CD4-positive, alpha-beta T cell (primary cell): ENCODE measurements at regions of chr9 and their contacts with region 1.

Region 1: GRCh38 chr9:136885950-136886578 is at the start of gene TRAF2:
- DNase-seq: peak; percentile 92 to 99 (median 96)
- ATAC-seq: peak; percentile 92
- H3K4me3 ChIP-seq: peak within 1 kb of the TSS; percentile 85
- H3K4me3 Mint-ChIP-seq: peak within 1 kb of the TSS; percentile 88
- H3K27ac ChIP-seq: peak within 1 kb of the TSS; percentile 81 to 95
- H3K27ac Mint-ChIP-seq: peak within 1 kb of the TSS; percentile 92
- H3K4me1 ChIP-seq: peaks cover 68% of the 10 kb centered on the region
- H3K4me1 Mint-ChIP-seq: peaks cover 26% of the 10 kb centered on the region
- H3K27me3 ChIP-seq: no peaks in the 10 kb centered on the region
- H3K27me3 Mint-ChIP-seq: no peaks in the 10 kb centered on the region
- CTCF ChIP-seq: no peak
- total RNA-seq, gene TRAF2: 10.6 to 11.6 TPM

Region 2: GRCh38 chr9:136807281-136808074 is 78.6 kb before region 1 on chr9 and contains the start of gene RABL6:
- CTCF ChIA-PET with region 1: no interaction called
- POLR2A ChIA-PET with region 1: interaction called, 13 read pairs
- intact Hi-C with region 1: loop called in 1 of 2 experiments (anchors 5 kb)
- DNase-seq: peak; percentile 60 to 94 (median 78)
- ATAC-seq: peak; percentile 88
- H3K4me3 ChIP-seq: peak within 1 kb of the TSS; percentile 68
- H3K4me3 Mint-ChIP-seq: peak within 1 kb of the TSS; percentile 90
- H3K27ac ChIP-seq: peak within 1 kb of the TSS; percentile 53 to 81
- H3K27ac Mint-ChIP-seq: peak within 1 kb of the TSS; percentile 81
- H3K4me1 ChIP-seq: peaks cover 49% of the 10 kb centered on the region
- H3K4me1 Mint-ChIP-seq: peaks cover 37% of the 10 kb centered on the region
- H3K27me3 ChIP-seq: no peaks in the 10 kb centered on the region
- H3K27me3 Mint-ChIP-seq: no peaks in the 10 kb centered on the region
- CTCF ChIP-seq: no peak
- total RNA-seq, gene RABL6: 46.4 to 48.5 TPM

Region 3: DNA sequence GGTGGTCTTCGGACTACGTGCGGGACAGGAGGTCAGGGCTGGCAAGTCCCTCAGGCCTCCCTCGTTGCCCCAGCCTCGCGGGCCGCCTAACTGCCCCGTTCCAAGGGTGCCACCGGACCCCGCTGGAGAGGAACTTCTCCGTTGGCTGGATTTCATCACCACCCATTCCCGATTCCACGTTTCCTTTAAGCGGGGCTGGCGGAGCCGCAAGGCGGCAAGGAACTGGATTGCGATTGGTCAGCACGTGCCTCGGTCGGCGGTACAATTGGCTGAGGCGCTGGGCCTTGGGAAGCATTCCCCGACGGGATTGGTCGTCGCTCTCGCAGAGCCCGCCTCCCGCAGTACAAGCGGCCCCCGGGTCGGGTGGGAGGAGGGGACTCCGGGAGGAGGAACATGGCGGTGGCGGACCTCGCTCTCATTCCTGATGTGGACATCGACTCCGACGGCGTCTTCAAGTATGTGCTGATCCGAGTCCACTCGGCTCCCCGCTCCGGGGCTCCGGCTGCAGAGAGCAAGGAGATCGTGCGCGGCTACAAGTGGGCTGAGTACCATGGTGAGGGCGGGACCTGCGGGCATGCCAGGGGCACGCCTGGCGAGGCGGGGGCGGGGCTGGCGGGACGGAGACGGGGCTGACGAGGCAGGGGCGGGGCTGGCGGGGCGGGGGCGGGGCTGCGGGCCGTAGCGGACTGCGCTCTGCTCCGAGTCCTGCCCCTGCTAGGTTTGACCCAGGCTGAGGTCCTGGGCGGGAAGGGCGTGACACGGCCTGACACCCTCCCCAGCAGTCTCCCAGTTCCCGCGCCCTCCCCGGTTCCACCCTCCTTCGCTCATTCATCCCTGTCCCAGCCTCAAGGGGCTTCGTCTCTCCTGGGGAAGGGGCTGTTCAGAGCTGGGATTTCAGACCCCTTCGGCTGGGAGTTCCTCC is 36.8 kb before region 1 on chr9 and contains the start of gene PHPT1:
- CTCF ChIA-PET with region 1: no interaction called
- POLR2A ChIA-PET with region 1: interaction called, 6 read pairs
- intact Hi-C with region 1: loop called (anchors 1 kb)
- DNase-seq: peak; percentile 89 to 98 (median 94)
- ATAC-seq: peak; percentile 92
- H3K4me3 ChIP-seq: peak within 1 kb of the TSS; percentile 84
- H3K4me3 Mint-ChIP-seq: peak within 1 kb of the TSS; percentile 97
- H3K27ac ChIP-seq: peak within 1 kb of the TSS in 1 of 2 donors; percentile 60
- H3K27ac Mint-ChIP-seq: peak within 1 kb of the TSS; percentile 91
- H3K4me1 ChIP-seq: peaks cover 45% of the 10 kb centered on the region
- H3K4me1 Mint-ChIP-seq: peaks cover 10% of the 10 kb centered on the region
- H3K27me3 ChIP-seq: peaks cover 15 to 16% of the 10 kb centered on the region in 2 experiments
- H3K27me3 Mint-ChIP-seq: peaks cover 21% of the 10 kb centered on the region
- CTCF ChIP-seq: no peak
- total RNA-seq, gene PHPT1: 13.6 to 17.8 TPM

Region 4: DNA sequence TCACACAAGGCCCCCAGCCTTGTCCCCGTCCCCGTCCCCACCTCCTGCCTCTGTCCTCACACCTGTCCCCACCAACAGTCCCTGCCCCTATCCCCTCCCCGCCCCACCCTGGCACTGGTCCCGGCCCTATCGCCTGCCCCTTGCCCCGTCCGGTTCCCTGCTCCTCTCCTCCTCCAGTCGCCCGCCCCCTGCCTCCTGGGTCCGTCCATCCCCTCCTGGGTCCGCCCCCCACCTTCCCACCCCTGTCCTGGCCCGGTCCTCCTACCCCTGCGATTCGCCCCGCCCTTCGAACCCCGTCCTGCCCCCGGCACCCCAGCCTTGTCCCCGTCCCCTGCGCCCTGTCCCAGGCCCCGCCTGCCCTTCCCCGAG is 20.3 kb before region 1 on chr9:
- CTCF ChIA-PET with region 1: interaction called, 3 read pairs
- POLR2A ChIA-PET with region 1: interaction called, 11 read pairs
- intact Hi-C with region 1: loop called (anchors 1 to 2 kb)
- DNase-seq: peak in 1 of 14 experiments; percentile 1
- ATAC-seq: peak; percentile 7
- H3K4me3 ChIP-seq: peak overlapping the region; percentile 57
- H3K4me3 Mint-ChIP-seq: peak overlapping the region; percentile 92
- H3K27ac ChIP-seq: peak overlapping the region; percentile 29 to 83
- H3K27ac Mint-ChIP-seq: peak overlapping the region; percentile 70
- H3K4me1 ChIP-seq: peaks cover 23% of the 10 kb centered on the region
- H3K4me1 Mint-ChIP-seq: peaks cover 15% of the 10 kb centered on the region
- H3K27me3 ChIP-seq: no peaks in the 10 kb centered on the region
- H3K27me3 Mint-ChIP-seq: no peaks in the 10 kb centered on the region
- CTCF ChIP-seq: no peak

Region 5: GRCh38 chr9:136902259-136902821 is 16.3 kb after region 1 on chr9:
- CTCF ChIA-PET with region 1: interaction called, 7 read pairs
- POLR2A ChIA-PET with region 1: interaction called, 21 read pairs
- intact Hi-C with region 1: loop called (anchors 2 kb)
- DNase-seq: peak; percentile 45 to 95 (median 76)
- ATAC-seq: peak; percentile 85
- H3K4me3 ChIP-seq: peak overlapping the region; percentile 53
- H3K4me3 Mint-ChIP-seq: peak overlapping the region; percentile 67
- H3K27ac ChIP-seq: peak overlapping the region; percentile 94 to 95
- H3K27ac Mint-ChIP-seq: peak overlapping the region; percentile 91
- H3K4me1 ChIP-seq: peaks cover 44% of the 10 kb centered on the region
- H3K4me1 Mint-ChIP-seq: peaks cover 35% of the 10 kb centered on the region
- H3K27me3 ChIP-seq: no peaks in the 10 kb centered on the region
- H3K27me3 Mint-ChIP-seq: no peaks in the 10 kb centered on the region
- CTCF ChIP-seq: no peak

Region 6: GRCh38 chr9:136944519-136945279 is 58.6 kb after region 1 on chr9 and contains the starts of genes C8G and FBXW5:
- CTCF ChIA-PET with region 1: interaction called, 6 read pairs
- POLR2A ChIA-PET with region 1: interaction called, 5 read pairs
- intact Hi-C with region 1: loop called in 1 of 2 experiments (anchors 1 kb)
- DNase-seq: peak; percentile 84 to 97 (median 94)
- ATAC-seq: peak; percentile 86
- H3K4me3 ChIP-seq: peak within 1 kb of the TSS; percentile 69
- H3K4me3 Mint-ChIP-seq: peak within 1 kb of the TSS; percentile 87
- H3K27ac ChIP-seq: peak within 1 kb of the TSS in 1 of 2 donors; percentile 21
- H3K27ac Mint-ChIP-seq: peak within 1 kb of the TSS; percentile 59
- H3K4me1 ChIP-seq: peaks cover 49% of the 10 kb centered on the region
- H3K4me1 Mint-ChIP-seq: peaks cover 5% of the 10 kb centered on the region
- H3K27me3 ChIP-seq: no peaks in the 10 kb centered on the region
- H3K27me3 Mint-ChIP-seq: no peaks in the 10 kb centered on the region
- CTCF ChIP-seq: peak; percentile 96
- total RNA-seq, gene C8G: not detected
- total RNA-seq, gene FBXW5: 41.0 to 41.7 TPM

Region 7: GRCh38 chr9:137670381-137671190 is 784.5 kb after region 1 on chr9:
- CTCF ChIA-PET with region 1: no interaction called
- POLR2A ChIA-PET with region 1: no interaction called
- intact Hi-C with region 1: no loop called
- DNase-seq: no peak
- ATAC-seq: no peak
- H3K4me3 ChIP-seq: no peak overlapping the region
- H3K4me3 Mint-ChIP-seq: no peak overlapping the region
- H3K27ac ChIP-seq: no peak overlapping the region
- H3K27ac Mint-ChIP-seq: no peak overlapping the region
- H3K4me1 ChIP-seq: peaks cover 34% of the 10 kb centered on the region
- H3K4me1 Mint-ChIP-seq: peaks cover 66% of the 10 kb centered on the region
- H3K27me3 ChIP-seq: no peaks in the 10 kb centered on the region
- H3K27me3 Mint-ChIP-seq: no peaks in the 10 kb centered on the region
- CTCF ChIP-seq: no peak